ENCODE measurements at regions of chr9 and their contacts with region 1.

Region 1: DNA sequence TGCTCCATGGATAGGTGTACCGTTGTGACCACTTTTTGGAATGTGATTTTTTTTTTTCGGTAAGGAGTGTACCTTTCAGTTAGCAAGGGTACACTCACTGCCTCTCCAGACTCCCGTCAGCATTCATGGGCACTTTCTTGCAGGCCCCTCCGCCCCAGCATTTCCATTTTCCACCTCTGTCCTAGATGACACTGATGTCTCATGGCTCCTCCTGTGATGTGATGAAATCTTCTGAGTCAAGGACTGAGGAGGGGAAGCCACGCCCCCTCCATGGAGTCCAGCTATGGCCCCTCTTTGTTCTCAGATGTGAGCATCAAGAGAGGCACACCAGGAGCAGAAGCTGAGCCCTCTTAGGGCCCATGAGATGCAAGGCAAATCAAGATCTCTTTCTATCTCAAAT is 61.8 kb downstream of the CTSL start:
- DNase-seq: no peak
- H3K4me3 ChIP-seq: no peak overlapping the region
- H3K27ac ChIP-seq: no peak overlapping the region
- H3K4me1 ChIP-seq: no peaks in the 10 kb centered on the region
- H3K27me3 ChIP-seq: no peaks in the 10 kb centered on the region
- CTCF ChIP-seq: no peak
- EP300 ChIP-seq: no peak
- POLR2A ChIP-seq: no peak

Region 2: GRCh38 chr9:87853882-87854579 is 66.3 kb after region 1 on chr9:
- in situ Hi-C with region 1: no loop called
- intact Hi-C with region 1: loop called (anchors 2 kb)
- DNase-seq: no peak
- H3K4me3 ChIP-seq: no peak overlapping the region
- H3K27ac ChIP-seq: no peak overlapping the region
- H3K4me1 ChIP-seq: no peaks in the 10 kb centered on the region
- H3K27me3 ChIP-seq: no peaks in the 10 kb centered on the region
- CTCF ChIP-seq: no peak
- EP300 ChIP-seq: no peak
- POLR2A ChIP-seq: no peak

Region 3: DNA sequence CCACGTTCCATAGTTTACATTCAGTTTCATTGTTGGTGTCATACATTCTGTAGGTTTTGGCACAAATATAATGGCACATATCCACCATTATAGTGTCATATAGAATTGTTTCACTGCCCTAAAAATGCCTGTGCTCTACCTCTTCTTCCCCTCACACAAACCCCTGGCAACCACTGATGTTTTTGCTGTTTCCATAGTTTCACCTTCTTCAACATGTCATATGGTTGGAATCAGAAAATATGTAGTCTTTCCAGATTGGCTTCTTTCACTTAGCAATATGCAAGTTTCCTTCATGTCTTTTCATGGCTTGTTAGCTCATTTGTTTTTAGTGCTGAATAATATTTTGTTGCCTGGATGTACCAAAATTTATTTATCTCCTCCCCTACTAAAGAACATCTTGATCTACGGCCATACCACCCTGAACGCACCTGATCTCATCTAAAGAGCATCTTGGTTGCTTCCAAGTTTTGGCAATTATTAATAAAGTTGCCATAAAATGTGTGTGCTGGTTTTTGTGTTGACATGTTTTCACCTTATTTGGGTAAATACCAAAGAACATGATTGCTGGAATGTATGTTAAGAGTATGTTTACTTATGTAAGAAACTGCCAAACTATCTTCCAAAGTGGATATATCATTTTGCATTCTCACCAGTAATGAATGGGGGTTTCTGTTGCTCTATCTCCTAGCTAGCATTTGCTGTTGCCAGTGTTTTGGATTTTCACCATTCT is 203.6 kb after region 1 on chr9:
- in situ Hi-C with region 1: no loop called
- intact Hi-C with region 1: no loop called
- DNase-seq: no peak
- H3K4me3 ChIP-seq: no peak overlapping the region
- H3K27ac ChIP-seq: no peak overlapping the region
- H3K4me1 ChIP-seq: peaks cover 0 to 17% (median 5%) of the 10 kb centered on the region in 4 donors
- H3K27me3 ChIP-seq: no peaks in the 10 kb centered on the region
- CTCF ChIP-seq: no peak
- EP300 ChIP-seq: no peak
- POLR2A ChIP-seq: no peak

Region 4: GRCh38 chr9:88011005-88011766 is 223.5 kb after region 1 on chr9:
- in situ Hi-C with region 1: no loop called
- intact Hi-C with region 1: no loop called
- DNase-seq: no peak
- H3K4me3 ChIP-seq: no peak overlapping the region
- H3K27ac ChIP-seq: no peak overlapping the region
- H3K4me1 ChIP-seq: no peaks in the 10 kb centered on the region
- H3K27me3 ChIP-seq: no peaks in the 10 kb centered on the region
- CTCF ChIP-seq: peak in 1 of 5 experiments; percentile 8
- EP300 ChIP-seq: no peak
- POLR2A ChIP-seq: no peak

Measured in transverse colon (tissue), 4 donors.